ENCODE measurements at regions of chr5 and their contacts with region 1.

Region 1: GRCh38 chr5:10283927-10284635 is 23.6 kb downstream of the CMBL start:
- DNase-seq: peak; percentile 89
- H3K4me3 Mint-ChIP-seq: no peak overlapping the region
- H3K27ac Mint-ChIP-seq: no peak overlapping the region
- H3K4me1 Mint-ChIP-seq: peaks cover 14% of the 10 kb centered on the region
- H3K27me3 Mint-ChIP-seq: no peaks in the 10 kb centered on the region
- CTCF ChIP-seq: peak; percentile 85

Region 2: DNA sequence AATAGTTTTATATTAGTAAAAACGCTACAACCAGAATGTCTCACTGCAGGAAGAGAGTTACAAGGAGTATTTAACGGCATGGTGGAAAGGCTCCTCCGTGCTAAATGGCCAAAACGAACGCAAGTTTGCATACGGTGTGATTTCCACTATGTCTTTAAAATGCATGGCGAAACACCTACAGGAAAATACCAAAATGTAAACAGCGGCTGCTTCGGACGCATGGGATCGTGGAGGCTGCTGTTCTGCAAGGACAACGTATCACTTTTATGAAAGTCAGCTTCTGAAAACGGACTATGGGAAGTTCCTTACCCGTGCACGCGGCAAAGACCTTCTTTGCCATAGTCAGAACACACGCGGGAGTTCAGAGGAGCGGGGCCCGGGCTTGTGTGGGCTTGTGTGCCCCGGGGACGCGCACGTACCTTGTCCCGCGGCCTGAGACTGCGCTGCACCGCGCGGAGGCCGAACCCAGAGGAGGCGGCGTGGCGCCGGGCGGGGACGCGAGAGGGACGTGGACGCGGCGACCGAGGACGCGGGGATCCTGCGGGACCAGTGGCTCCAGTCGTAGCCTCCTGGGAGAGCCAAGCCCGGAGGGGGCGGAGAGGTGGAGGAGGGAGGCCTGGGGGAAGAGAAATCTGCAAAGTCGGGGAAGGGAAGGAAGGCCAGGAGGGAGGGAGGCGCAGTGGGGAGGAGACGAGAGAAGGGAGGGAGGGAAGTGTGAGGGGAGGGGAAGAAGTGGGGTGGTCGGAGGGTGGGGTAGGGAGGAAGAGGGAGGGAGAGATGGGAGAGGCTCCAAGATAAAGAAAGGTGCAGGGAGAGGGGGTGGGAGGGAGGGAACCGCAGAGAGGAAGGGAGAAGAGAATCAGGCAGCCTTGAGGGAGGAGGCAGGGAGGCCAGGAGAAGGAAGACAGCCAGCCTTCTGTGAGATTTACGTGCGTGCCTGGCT is 23.4 kb after region 1 on chr5 and contains the start of gene CMBL:
- CTCF ChIA-PET with region 1: interaction called, 6 read pairs
- intact Hi-C with region 1: loop called (anchors 2 kb)
- DNase-seq: peak; percentile 51
- H3K4me3 Mint-ChIP-seq: peak within 1 kb of the TSS; percentile 94
- H3K27ac Mint-ChIP-seq: peak within 1 kb of the TSS; percentile 72
- H3K4me1 Mint-ChIP-seq: peaks cover 38% of the 10 kb centered on the region
- H3K27me3 Mint-ChIP-seq: no peaks in the 10 kb centered on the region
- CTCF ChIP-seq: no peak
- total RNA-seq, gene CMBL: 12.9 and 17.0 TPM in 2 replicates

Region 3: GRCh38 chr5:10353241-10354047 is 69.4 kb after region 1 on chr5 and contains the start of gene MARCHF6:
- CTCF ChIA-PET with region 1: interaction called, 7 read pairs
- intact Hi-C with region 1: loop called (anchors 2 kb)
- DNase-seq: peak; percentile 96
- H3K4me3 Mint-ChIP-seq: peak within 1 kb of the TSS; percentile 93
- H3K27ac Mint-ChIP-seq: peak within 1 kb of the TSS; percentile 99
- H3K4me1 Mint-ChIP-seq: peaks cover 26% of the 10 kb centered on the region
- H3K27me3 Mint-ChIP-seq: no peaks in the 10 kb centered on the region
- CTCF ChIP-seq: no peak
- total RNA-seq, gene MARCHF6: 155 and 160 TPM in 2 replicates

Region 4: GRCh38 chr5:10364186-10364683 is 80.2 kb after region 1 on chr5:
- CTCF ChIA-PET with region 1: interaction called, 22 read pairs
- intact Hi-C with region 1: loop called (anchors 1 kb)
- DNase-seq: peak; percentile 39
- H3K4me3 Mint-ChIP-seq: no peak overlapping the region
- H3K27ac Mint-ChIP-seq: peak overlapping the region; percentile 33
- H3K4me1 Mint-ChIP-seq: peaks cover 34% of the 10 kb centered on the region
- H3K27me3 Mint-ChIP-seq: no peaks in the 10 kb centered on the region
- CTCF ChIP-seq: peak; percentile 48

Region 5: DNA sequence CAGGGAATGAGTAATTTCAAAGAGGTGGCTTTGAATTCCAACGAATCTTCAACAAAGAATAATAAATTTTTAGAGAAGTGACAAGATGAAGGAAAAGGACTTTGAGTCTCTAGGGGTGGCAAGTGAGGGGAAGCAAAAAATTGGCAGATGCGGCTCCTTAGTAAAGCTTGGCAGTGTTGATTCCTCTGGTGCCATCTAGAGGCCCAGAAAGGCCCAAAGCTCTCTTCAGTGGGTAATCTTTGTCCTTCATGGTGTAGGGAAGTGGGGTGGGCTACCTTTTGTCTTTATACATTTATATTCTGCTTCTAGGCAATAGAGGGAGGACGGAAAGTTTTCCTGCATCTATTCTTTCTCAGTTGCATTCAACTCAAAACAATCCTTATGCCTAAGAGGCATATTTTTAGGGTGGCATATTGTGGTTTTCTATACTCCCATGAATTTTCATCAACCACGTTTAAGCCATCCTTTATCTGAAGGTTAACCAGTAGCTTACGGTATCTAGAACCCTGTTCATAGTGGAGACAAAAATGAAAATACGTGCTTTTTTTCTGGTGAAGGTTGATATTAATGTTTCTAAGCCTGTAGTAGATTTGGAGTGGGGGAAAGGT is 140.1 kb after region 1 on chr5:
- CTCF ChIA-PET with region 1: interaction called, 8 read pairs
- intact Hi-C with region 1: loop called (anchors 1 kb)
- DNase-seq: peak; percentile 12
- H3K4me3 Mint-ChIP-seq: no peak overlapping the region
- H3K27ac Mint-ChIP-seq: no peak overlapping the region
- H3K4me1 Mint-ChIP-seq: no peaks in the 10 kb centered on the region
- H3K27me3 Mint-ChIP-seq: no peaks in the 10 kb centered on the region
- CTCF ChIP-seq: no peak

Region 6: GRCh38 chr5:10439692-10440091 is 155.6 kb after region 1 on chr5:
- CTCF ChIA-PET with region 1: interaction called, 3 read pairs
- intact Hi-C with region 1: loop called (anchors 5 kb)
- DNase-seq: no peak
- H3K4me3 Mint-ChIP-seq: no peak overlapping the region
- H3K27ac Mint-ChIP-seq: no peak overlapping the region
- H3K4me1 Mint-ChIP-seq: no peaks in the 10 kb centered on the region
- H3K27me3 Mint-ChIP-seq: no peaks in the 10 kb centered on the region
- CTCF ChIP-seq: no peak

Region 7: GRCh38 chr5:10627160-10627701 is 343.1 kb after region 1 on chr5:
- CTCF ChIA-PET with region 1: interaction called, 4 read pairs
- intact Hi-C with region 1: loop called (anchors 1 kb)
- DNase-seq: no peak
- H3K4me3 Mint-ChIP-seq: peak overlapping the region; percentile 66
- H3K27ac Mint-ChIP-seq: peak overlapping the region; percentile 67
- H3K4me1 Mint-ChIP-seq: peaks cover 19% of the 10 kb centered on the region
- H3K27me3 Mint-ChIP-seq: peaks cover 20% of the 10 kb centered on the region
- CTCF ChIP-seq: no peak

Measured in Calu3 (cell line).